ENCODE measurements at regions of chr5 and their contacts with region 1.

Region 1: GRCh38 chr5:154405078-154405792 is 40.6 kb upstream of the SAP30L start:
- DNase-seq: peak; percentile 88
- ATAC-seq: peak; percentile 99

Region 2: DNA sequence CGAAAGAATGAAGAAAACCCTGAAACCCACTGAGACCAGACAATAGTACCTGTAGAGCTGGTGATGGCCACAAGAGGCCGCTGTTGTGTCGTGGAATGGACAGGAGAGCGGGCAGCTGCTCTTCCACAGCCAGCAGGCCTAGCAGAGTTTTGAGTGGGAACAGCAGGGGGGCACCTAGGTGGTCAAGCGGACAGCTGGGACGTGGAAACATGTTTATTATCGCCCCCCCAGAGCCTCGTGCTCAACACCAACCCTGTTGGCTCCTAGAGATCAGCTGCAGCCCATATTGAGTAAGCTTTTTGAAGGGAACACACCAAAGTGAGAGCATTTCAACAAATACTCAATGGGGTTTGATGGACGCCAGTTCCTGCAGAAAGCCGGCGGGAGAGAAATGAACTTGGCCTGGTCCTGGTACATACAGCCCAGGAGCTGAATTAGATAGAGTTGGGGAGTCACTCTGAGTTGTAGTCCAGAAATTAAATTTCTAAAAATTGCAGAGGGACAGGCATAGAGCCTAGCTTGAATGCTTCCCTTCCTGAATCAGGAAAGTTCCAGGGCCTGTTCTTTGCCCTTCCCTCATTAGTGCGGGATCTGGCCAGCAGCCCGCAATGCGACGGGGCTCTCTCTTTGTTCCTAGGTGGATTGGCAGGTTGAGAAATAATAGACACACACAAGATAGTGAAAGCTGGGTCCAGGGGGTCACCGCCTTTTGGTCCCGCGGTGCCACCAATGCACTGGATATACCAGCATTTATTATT is 332.6 kb before region 1 on chr5:
- intact Hi-C with region 1: loop called (anchors 5 kb)
- DNase-seq: peak; percentile 90
- ATAC-seq: peak; percentile 95

Region 3: DNA sequence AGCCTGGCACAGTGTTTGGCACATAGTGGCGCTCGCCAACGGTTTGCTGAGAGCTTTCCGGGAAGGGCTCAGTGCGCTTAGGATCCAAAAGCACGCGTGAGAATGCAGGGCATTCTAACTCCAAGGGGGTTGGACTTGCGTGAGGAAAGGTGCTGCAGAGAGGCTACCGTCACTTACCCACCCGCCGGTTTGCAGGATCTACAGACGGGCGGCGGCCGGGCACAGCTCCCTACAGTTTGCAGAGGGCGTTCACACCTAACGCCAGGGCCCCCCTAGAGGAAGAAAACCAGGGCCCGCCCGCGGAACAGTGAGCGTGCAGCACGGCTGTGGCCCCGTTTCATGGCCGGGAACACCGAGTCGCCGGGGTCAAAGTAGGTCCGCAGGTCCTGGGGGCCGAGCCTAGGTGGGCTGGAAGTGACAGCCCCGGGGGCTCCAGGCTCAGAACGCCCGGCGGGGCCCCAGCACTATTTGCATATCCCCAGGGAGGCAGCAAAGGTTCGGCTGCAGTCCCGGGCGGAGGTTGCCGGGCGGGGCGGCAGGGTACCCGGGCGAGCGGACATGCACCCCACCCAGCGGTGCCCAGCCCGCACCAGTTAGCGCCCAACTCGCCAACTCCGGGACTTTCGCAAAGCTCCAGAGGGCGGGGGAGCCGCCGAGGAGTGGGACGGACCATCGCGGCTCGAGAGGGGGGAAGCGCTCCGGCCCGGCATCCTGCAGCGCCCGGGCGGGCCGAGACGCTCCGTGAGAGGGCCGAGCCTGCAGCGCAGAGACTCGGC is 215.2 kb before region 1 on chr5:
- intact Hi-C with region 1: loop called (anchors 10 kb)
- DNase-seq: peak; percentile 92
- ATAC-seq: peak; percentile 93

Measured in Right ventricle myocardium superior (tissue), 1 donor.